ENCODE measurements at regions of chr1 and their contacts with region 1.

Region 1: GRCh38 chr1:175154629-175155472 is 37.7 kb downstream of the KIAA0040 start:
- DNase-seq: peak; percentile 60 to 88 (median 77)
- ATAC-seq: peak; percentile 65
- H3K4me3 ChIP-seq: no peak overlapping the region
- H3K4me3 Mint-ChIP-seq: no peak overlapping the region
- H3K27ac ChIP-seq: no peak overlapping the region
- H3K27ac Mint-ChIP-seq: no peak overlapping the region
- H3K4me1 ChIP-seq: peaks cover 13% of the 10 kb centered on the region
- H3K4me1 Mint-ChIP-seq: peaks cover 20% of the 10 kb centered on the region
- H3K27me3 ChIP-seq: peaks cover 0 to 6% of the 10 kb centered on the region in 2 experiments
- H3K27me3 Mint-ChIP-seq: peaks cover 26% of the 10 kb centered on the region
- CTCF ChIP-seq: peak; percentile 83

Region 2: GRCh38 chr1:175179845-175180590 is 25.2 kb after region 1 on chr1:
- CTCF ChIA-PET with region 1: interaction called, 41 read pairs
- POLR2A ChIA-PET with region 1: no interaction called
- intact Hi-C with region 1: no loop called
- DNase-seq: no peak
- ATAC-seq: no peak
- H3K4me3 ChIP-seq: no peak overlapping the region
- H3K4me3 Mint-ChIP-seq: no peak overlapping the region
- H3K27ac ChIP-seq: no peak overlapping the region
- H3K27ac Mint-ChIP-seq: peak overlapping the region; percentile 47
- H3K4me1 ChIP-seq: peaks cover 34% of the 10 kb centered on the region
- H3K4me1 Mint-ChIP-seq: peaks cover 85% of the 10 kb centered on the region
- H3K27me3 ChIP-seq: no peaks in the 10 kb centered on the region
- H3K27me3 Mint-ChIP-seq: no peaks in the 10 kb centered on the region
- CTCF ChIP-seq: no peak

Region 3: GRCh38 chr1:175221666-175222175 is 66.9 kb after region 1 on chr1:
- CTCF ChIA-PET with region 1: interaction called, 9 read pairs
- POLR2A ChIA-PET with region 1: no interaction called
- intact Hi-C with region 1: loop called in 1 of 2 experiments (anchors 5 kb)
- DNase-seq: no peak
- ATAC-seq: no peak
- H3K4me3 ChIP-seq: no peak overlapping the region
- H3K4me3 Mint-ChIP-seq: no peak overlapping the region
- H3K27ac ChIP-seq: no peak overlapping the region
- H3K27ac Mint-ChIP-seq: no peak overlapping the region
- H3K4me1 ChIP-seq: no peaks in the 10 kb centered on the region
- H3K4me1 Mint-ChIP-seq: peaks cover 11% of the 10 kb centered on the region
- H3K27me3 ChIP-seq: no peaks in the 10 kb centered on the region
- H3K27me3 Mint-ChIP-seq: no peaks in the 10 kb centered on the region
- CTCF ChIP-seq: no peak

Region 4: DNA sequence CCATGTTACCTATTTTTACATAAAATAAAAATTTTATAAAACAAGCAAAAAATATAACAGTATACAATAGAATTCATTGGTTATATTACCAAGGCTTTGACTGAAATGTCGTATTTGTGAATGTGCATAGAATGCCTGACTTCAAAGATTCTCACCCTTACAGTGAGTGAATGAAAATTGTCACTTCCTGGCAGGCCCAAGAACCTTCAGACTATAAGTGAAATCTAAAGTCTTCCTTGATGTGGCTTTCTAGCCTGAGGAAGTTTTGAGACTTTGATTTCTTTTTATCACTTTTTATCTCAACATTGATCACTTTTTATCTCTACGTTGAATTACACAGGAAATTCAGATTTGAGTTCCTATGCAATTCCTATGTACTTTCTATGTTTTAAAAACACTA is 142.4 kb after region 1 on chr1:
- CTCF ChIA-PET with region 1: interaction called, 17 read pairs
- POLR2A ChIA-PET with region 1: no interaction called
- intact Hi-C with region 1: no loop called
- DNase-seq: peak in 2 of 9 experiments; percentile 17 to 52
- ATAC-seq: peak; percentile 72
- H3K4me3 ChIP-seq: no peak overlapping the region
- H3K4me3 Mint-ChIP-seq: no peak overlapping the region
- H3K27ac ChIP-seq: no peak overlapping the region
- H3K27ac Mint-ChIP-seq: no peak overlapping the region
- H3K4me1 ChIP-seq: peaks cover 28% of the 10 kb centered on the region
- H3K4me1 Mint-ChIP-seq: peaks cover 36% of the 10 kb centered on the region
- H3K27me3 ChIP-seq: no peaks in the 10 kb centered on the region
- H3K27me3 Mint-ChIP-seq: peaks cover 14% of the 10 kb centered on the region
- CTCF ChIP-seq: no peak

Region 5: GRCh38 chr1:175331891-175332290 is 177.0 kb after region 1 on chr1:
- CTCF ChIA-PET with region 1: interaction called, 23 read pairs
- POLR2A ChIA-PET with region 1: no interaction called
- intact Hi-C with region 1: no loop called
- DNase-seq: no peak
- ATAC-seq: no peak
- H3K4me3 ChIP-seq: no peak overlapping the region
- H3K4me3 Mint-ChIP-seq: no peak overlapping the region
- H3K27ac ChIP-seq: no peak overlapping the region
- H3K27ac Mint-ChIP-seq: no peak overlapping the region
- H3K4me1 ChIP-seq: no peaks in the 10 kb centered on the region
- H3K4me1 Mint-ChIP-seq: no peaks in the 10 kb centered on the region
- H3K27me3 ChIP-seq: no peaks in the 10 kb centered on the region
- H3K27me3 Mint-ChIP-seq: no peaks in the 10 kb centered on the region
- CTCF ChIP-seq: no peak

Region 6: GRCh38 chr1:175824079-175824478 is 669.2 kb after region 1 on chr1:
- CTCF ChIA-PET with region 1: interaction called, 3 read pairs
- POLR2A ChIA-PET with region 1: no interaction called
- intact Hi-C with region 1: loop called in 1 of 2 experiments (anchors 2 kb)
- DNase-seq: peak in 2 of 9 experiments; percentile 12 to 13
- ATAC-seq: no peak
- H3K4me3 ChIP-seq: no peak overlapping the region
- H3K4me3 Mint-ChIP-seq: no peak overlapping the region
- H3K27ac ChIP-seq: no peak overlapping the region
- H3K27ac Mint-ChIP-seq: no peak overlapping the region
- H3K4me1 ChIP-seq: no peaks in the 10 kb centered on the region
- H3K4me1 Mint-ChIP-seq: no peaks in the 10 kb centered on the region
- H3K27me3 ChIP-seq: peaks cover 0 to 2% of the 10 kb centered on the region in 2 experiments
- H3K27me3 Mint-ChIP-seq: peaks cover 2% of the 10 kb centered on the region
- CTCF ChIP-seq: no peak